ENCODE measurements at regions of chr1 and their contacts with region 1.

Region 1: GRCh38 chr1:225977937-225978748 is 21.0 kb downstream of the SDE2 start:
- DNase-seq: no peak
- H3K4me3 ChIP-seq: no peak overlapping the region
- H3K27ac ChIP-seq: no peak overlapping the region
- H3K4me1 ChIP-seq: no peaks in the 10 kb centered on the region; a peak in 1 of 4 replicates
- H3K27me3 ChIP-seq: no peaks in the 10 kb centered on the region
- CTCF ChIP-seq: no peak
- EP300 ChIP-seq: no peak
- RAD21 ChIP-seq: no peak

Region 2: GRCh38 chr1:225480825-225481434 is 497.2 kb before region 1 on chr1:
- CTCF ChIA-PET with region 1: interaction called, 130 read pairs
- POLR2A ChIA-PET with region 1: no interaction called
- DNase-seq: peak; percentile 68
- H3K4me3 ChIP-seq: no peak overlapping the region
- H3K27ac ChIP-seq: no peak overlapping the region
- H3K4me1 ChIP-seq: peaks cover 0 to 6% of the 10 kb centered on the region in 2 experiments; a peak in 2 of 4 replicates
- H3K27me3 ChIP-seq: no peaks in the 10 kb centered on the region
- CTCF ChIP-seq: peak; percentile 75
- EP300 ChIP-seq: no peak
- RAD21 ChIP-seq: peak; percentile 65